Motor neuron (in vitro differentiated cells): ENCODE measurements at regions of chr1 and their contacts with region 1.

Region 1: GRCh38 chr1:56831871-56832693 is 12.9 kb upstream of the FYB2 start:
- ATAC-seq: peak; percentile 72 to 90 (median 79)
- H3K4me3 ChIP-seq: no peak overlapping the region
- H3K27ac ChIP-seq: no peak overlapping the region
- H3K4me1 ChIP-seq: peaks cover 0 to 6% of the 10 kb centered on the region in 2 donors

Region 2: GRCh38 chr1:56330391-56331026 is 501.6 kb before region 1 on chr1:
- in situ Hi-C with region 1: no loop called
- ATAC-seq: peak in 6 of 8 experiments; percentile 2 to 58 (median 44)
- H3K4me3 ChIP-seq: no peak overlapping the region
- H3K27ac ChIP-seq: no peak overlapping the region
- H3K4me1 ChIP-seq: peaks cover 28 to 30% of the 10 kb centered on the region in 2 donors

Region 3: GRCh38 chr1:57061369-57061768 is 229.3 kb after region 1 on chr1:
- in situ Hi-C with region 1: loop called in 1 of 9 experiments (anchors 25 kb)
- ATAC-seq: peak in 6 of 8 experiments; percentile 13 to 84 (median 48)
- H3K4me3 ChIP-seq: no peak overlapping the region
- H3K27ac ChIP-seq: no peak overlapping the region
- H3K4me1 ChIP-seq: peaks cover 0 to 6% of the 10 kb centered on the region in 2 donors

Region 4: DNA sequence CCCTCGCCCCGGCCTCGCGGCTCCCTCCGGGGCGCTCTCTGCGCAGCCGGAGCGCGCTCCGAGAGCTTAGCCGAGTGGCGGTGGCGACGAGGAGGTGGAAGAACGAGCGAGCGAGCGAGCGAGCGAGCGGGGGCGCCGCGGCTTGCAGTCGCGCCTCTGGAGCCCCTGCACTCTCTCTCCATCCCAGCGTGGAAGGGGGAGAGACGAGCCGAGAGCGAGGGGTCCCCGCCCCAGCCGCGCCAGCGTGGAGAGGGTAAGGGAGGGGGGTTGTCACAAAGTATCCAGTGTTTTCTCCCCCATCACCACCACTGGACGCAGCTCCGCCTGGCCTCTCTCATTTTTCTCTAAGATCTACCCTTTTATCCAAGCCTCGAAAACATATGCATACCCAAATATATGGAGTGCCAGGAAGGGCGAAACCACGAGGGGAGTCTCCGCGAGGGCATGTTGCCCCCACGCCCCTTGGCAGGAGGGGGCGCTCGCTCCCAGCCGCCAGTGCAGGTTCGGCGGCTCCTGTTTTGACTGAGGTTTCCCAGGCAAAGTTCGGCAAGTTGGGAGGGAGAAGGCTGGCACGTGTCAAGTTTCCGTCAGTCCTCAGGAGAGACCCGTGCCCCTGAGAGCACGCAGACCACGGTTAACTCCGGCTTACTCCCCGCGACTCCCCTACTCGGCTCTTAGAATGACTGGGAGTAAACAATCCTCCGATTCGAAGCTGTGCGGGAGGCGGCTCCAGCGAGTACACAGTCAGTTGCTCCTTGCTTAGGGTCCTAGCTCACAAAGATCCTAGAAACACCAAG is 592.3 kb after region 1 on chr1:
- in situ Hi-C with region 1: loop called in 3 of 9 experiments (anchors 25 kb)
- ATAC-seq: peak; percentile 52 to 71 (median 55)
- H3K4me3 ChIP-seq: peak overlapping the region; percentile 41 to 86 (median 60)
- H3K27ac ChIP-seq: peak overlapping the region; percentile 47 to 73
- H3K4me1 ChIP-seq: peaks cover 2 to 10% of the 10 kb centered on the region in 2 donors

Region 5: DNA sequence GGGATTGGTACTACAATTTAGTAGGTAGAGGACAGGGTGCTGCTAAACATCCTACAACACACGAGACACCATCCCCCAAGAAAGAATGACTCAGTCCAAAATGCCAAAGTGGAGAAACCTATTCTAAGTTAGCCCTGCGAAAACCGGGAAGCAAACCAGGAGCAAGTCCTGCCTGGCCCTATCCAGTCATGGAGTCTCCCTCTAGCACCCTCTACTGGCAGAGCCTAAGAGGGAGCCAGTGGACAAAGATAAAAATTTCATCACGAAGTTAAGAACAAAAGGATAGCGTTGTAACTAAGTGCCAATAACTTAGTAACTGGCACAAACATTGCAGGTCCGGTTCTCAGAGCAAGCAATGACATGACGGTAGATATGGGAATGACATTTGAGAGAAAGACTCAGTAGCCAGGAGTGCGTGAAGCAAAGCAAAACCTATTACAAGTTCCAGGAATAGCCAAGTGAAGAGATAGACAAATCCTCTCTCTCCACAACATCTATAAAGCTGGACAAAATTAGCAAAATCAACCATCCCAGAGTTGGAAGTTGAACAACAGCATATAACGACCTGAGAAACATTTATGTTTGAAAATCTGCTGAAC is 1331.0 kb after region 1 on chr1:
- in situ Hi-C with region 1: loop called in 1 of 9 experiments (anchors 25 kb)
- ATAC-seq: peak; percentile 84 to 96 (median 92)
- H3K4me3 ChIP-seq: no peak overlapping the region
- H3K27ac ChIP-seq: no peak overlapping the region
- H3K4me1 ChIP-seq: peaks cover 7 to 11% of the 10 kb centered on the region in 2 donors

Region 6: GRCh38 chr1:58573705-58574591 is 1741.9 kb after region 1 on chr1:
- in situ Hi-C with region 1: loop called in 2 of 9 experiments (anchors 25 kb)
- ATAC-seq: no peak
- H3K4me3 ChIP-seq: no peak overlapping the region
- H3K27ac ChIP-seq: no peak overlapping the region
- H3K4me1 ChIP-seq: peaks cover 17 to 32% of the 10 kb centered on the region in 2 donors